Caco-2 (cell line): ENCODE measurements at regions of chr20 and their contacts with region 1.

Region 1: DNA sequence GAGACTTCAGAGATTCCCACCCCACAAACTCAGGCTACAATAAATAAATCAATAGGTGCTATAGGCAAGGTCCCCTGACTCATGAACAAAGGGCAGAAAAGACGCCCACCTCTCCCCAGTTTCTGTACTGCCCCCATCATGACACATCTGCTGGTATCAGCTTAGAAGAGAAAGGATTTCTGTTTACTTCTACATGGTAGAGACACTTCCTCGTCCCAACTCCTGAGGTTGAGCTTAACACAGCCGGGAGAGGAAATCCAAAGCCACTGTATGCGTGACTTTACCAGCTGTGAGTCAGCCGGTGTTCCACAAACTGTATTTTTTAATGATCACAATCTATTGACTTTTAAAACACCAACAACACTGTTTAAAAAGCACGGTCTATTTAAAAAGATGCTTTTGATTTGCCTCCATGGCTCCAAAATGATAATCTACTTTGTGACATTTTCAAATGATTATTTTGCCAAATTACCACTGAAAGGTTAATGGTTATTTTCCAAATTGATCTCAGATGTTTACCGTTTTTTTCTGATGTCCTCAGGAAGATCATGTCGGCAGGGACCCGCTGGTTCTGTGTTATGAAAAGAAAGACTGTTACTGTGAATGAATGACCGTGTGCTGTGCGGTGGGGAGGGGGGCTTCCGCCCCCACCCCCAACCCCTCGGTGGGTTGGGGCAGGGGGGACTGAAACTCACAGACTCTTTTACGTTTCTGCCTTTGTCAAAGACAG is 72.5 kb downstream of the ATP9A start:
- DNase-seq: no peak
- H3K4me3 ChIP-seq: no peak overlapping the region
- H3K4me3 Mint-ChIP-seq: no peak overlapping the region
- H3K27ac Mint-ChIP-seq: peak overlapping the region; percentile 0
- H3K4me1 ChIP-seq: peaks cover 4% of the 10 kb centered on the region
- H3K4me1 Mint-ChIP-seq: peaks cover 29% of the 10 kb centered on the region
- H3K27me3 ChIP-seq: no peaks in the 10 kb centered on the region
- H3K27me3 Mint-ChIP-seq: no peaks in the 10 kb centered on the region
- CTCF ChIP-seq: no peak

Region 2: DNA sequence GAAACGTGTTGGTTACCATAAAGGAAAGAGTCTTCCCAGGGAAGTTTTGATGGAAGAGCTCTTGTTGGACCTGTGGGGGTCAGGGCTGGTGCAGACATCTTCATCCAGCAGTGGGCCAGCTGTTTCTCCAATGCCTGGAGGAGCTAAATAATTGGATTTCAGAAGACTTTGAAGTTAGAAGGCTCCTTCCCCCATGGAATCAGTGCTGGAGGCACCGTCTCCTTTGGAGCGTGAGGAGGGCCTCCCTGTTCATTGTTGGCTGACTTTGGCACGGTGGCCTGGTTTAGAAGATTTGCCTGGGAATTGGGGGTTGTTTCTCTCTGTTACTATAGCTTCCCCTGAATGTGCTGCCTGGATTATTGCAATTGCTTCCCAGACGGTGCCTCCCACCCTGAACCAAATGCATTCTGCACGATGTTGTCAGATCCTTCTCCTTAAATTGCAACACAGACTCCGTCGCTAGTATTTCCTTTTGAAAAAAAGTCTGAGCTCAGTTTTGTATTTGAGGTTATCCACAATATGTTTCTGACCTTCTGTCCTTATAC is 645.1 kb before region 1 on chr20:
- CTCF ChIA-PET with region 1: interaction called, 10 read pairs
- POLR2A ChIA-PET with region 1: no interaction called
- intact Hi-C with region 1: no loop called
- DNase-seq: peak in 1 of 2 experiments; percentile 40
- H3K4me3 ChIP-seq: no peak overlapping the region
- H3K4me3 Mint-ChIP-seq: no peak overlapping the region
- H3K27ac Mint-ChIP-seq: no peak overlapping the region
- H3K4me1 ChIP-seq: no peaks in the 10 kb centered on the region
- H3K4me1 Mint-ChIP-seq: no peaks in the 10 kb centered on the region
- H3K27me3 ChIP-seq: no peaks in the 10 kb centered on the region; the same call in none of the 2 replicates
- H3K27me3 Mint-ChIP-seq: peaks cover 31% of the 10 kb centered on the region
- CTCF ChIP-seq: no peak

Region 3: DNA sequence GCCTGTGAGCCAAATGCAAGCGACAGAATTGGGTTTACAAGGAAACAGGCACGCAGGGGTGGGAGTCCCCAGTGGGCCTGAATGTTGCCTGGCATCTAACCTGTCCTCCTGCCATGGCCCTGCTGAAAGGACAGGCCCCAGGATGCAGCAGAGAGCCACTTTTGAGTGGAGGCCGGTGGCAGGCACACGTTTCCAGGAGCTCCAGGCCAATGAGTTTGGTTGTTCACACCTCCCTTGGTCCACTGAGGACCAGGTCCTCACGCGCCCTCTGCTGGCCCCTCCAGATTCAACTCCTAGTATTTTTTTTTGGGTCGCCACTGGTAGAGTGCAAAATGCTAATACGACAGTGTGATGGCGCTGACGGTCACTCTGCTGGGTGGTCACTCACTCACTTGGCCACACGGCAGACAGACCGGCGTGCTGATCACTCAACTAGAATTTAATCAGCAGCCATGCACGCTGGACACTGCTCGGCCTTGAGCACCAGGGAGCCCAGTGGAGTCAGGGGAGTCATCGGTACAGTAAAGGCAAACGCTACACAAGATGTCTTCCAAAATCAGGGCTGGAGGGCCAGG is 71.5 kb before region 1 on chr20:
- CTCF ChIA-PET with region 1: no interaction called
- POLR2A ChIA-PET with region 1: no interaction called
- intact Hi-C with region 1: no loop called
- DNase-seq: peak; percentile 83 to 86
- H3K4me3 ChIP-seq: no peak overlapping the region
- H3K4me3 Mint-ChIP-seq: no peak overlapping the region
- H3K27ac Mint-ChIP-seq: no peak overlapping the region
- H3K4me1 ChIP-seq: peaks cover 3% of the 10 kb centered on the region; the same call in 1 of the 2 replicates
- H3K4me1 Mint-ChIP-seq: no peaks in the 10 kb centered on the region
- H3K27me3 ChIP-seq: no peaks in the 10 kb centered on the region
- H3K27me3 Mint-ChIP-seq: no peaks in the 10 kb centered on the region
- CTCF ChIP-seq: peak; percentile 85 to 97

Region 4: GRCh38 chr20:51667002-51667408 is 28.7 kb before region 1 on chr20:
- CTCF ChIA-PET with region 1: interaction called, 17 read pairs
- POLR2A ChIA-PET with region 1: interaction called, 5 read pairs
- intact Hi-C with region 1: no loop called
- DNase-seq: peak; percentile 76 to 82
- H3K4me3 ChIP-seq: no peak overlapping the region
- H3K4me3 Mint-ChIP-seq: no peak overlapping the region
- H3K27ac Mint-ChIP-seq: peak overlapping the region; percentile 8
- H3K4me1 ChIP-seq: peaks cover 36% of the 10 kb centered on the region
- H3K4me1 Mint-ChIP-seq: peaks cover 36% of the 10 kb centered on the region
- H3K27me3 ChIP-seq: no peaks in the 10 kb centered on the region
- H3K27me3 Mint-ChIP-seq: no peaks in the 10 kb centered on the region
- CTCF ChIP-seq: no peak

Region 5: DNA sequence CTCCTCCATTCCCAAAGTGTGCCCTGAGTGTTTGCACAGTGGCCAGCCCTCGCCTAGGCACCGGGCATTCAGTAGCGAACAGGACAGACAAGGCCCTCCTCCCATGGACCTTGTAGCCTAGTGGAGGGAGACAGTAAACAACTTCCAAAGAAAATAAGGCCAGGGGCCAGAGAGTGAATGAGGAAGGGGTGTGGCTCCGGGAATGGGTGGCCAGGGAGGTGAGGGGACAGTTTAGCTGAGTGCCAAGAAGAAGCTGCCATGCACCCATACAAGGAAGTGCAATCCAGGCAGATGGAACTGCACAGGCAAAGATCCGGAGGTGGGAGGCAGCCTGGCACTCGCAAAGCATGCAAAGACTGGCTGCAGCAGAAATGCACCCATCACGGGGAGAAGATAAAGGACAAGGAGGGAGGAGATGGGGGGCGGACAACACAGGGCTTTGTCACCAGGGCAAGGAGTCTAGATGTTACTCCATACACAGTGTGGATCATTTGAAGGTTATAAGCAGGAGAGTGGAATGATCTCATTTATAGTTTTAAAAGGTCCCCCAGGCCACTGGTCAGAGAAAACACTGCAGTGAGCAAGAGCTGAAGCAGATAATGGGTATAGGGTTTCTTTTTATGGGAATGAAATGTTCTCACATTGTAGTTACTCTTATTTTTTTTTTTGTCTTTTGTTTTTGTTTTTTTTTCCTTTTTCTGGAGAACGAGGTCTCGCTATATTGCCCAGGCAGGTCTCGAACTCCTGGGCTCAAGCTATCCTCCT is 40.3 kb after region 1 on chr20:
- CTCF ChIA-PET with region 1: interaction called, 7 read pairs
- POLR2A ChIA-PET with region 1: no interaction called
- intact Hi-C with region 1: loop called (anchors 2 kb)
- DNase-seq: no peak
- H3K4me3 ChIP-seq: no peak overlapping the region
- H3K4me3 Mint-ChIP-seq: no peak overlapping the region
- H3K27ac Mint-ChIP-seq: peak overlapping the region; percentile 7
- H3K4me1 ChIP-seq: peaks cover 23% of the 10 kb centered on the region
- H3K4me1 Mint-ChIP-seq: peaks cover 52% of the 10 kb centered on the region
- H3K27me3 ChIP-seq: no peaks in the 10 kb centered on the region
- H3K27me3 Mint-ChIP-seq: no peaks in the 10 kb centered on the region
- CTCF ChIP-seq: no peak

Region 6: GRCh38 chr20:51767010-51767558 is 71.3 kb after region 1 on chr20:
- CTCF ChIA-PET with region 1: interaction called, 38 read pairs
- POLR2A ChIA-PET with region 1: interaction called, 6 read pairs
- intact Hi-C with region 1: no loop called
- DNase-seq: peak; percentile 99
- H3K4me3 ChIP-seq: peak overlapping the region; percentile 95
- H3K4me3 Mint-ChIP-seq: peak overlapping the region; percentile 84
- H3K27ac Mint-ChIP-seq: peak overlapping the region; percentile 80
- H3K4me1 ChIP-seq: peaks cover 15% of the 10 kb centered on the region
- H3K4me1 Mint-ChIP-seq: peaks cover 17% of the 10 kb centered on the region
- H3K27me3 ChIP-seq: no peaks in the 10 kb centered on the region
- H3K27me3 Mint-ChIP-seq: no peaks in the 10 kb centered on the region
- CTCF ChIP-seq: no peak

Region 7: DNA sequence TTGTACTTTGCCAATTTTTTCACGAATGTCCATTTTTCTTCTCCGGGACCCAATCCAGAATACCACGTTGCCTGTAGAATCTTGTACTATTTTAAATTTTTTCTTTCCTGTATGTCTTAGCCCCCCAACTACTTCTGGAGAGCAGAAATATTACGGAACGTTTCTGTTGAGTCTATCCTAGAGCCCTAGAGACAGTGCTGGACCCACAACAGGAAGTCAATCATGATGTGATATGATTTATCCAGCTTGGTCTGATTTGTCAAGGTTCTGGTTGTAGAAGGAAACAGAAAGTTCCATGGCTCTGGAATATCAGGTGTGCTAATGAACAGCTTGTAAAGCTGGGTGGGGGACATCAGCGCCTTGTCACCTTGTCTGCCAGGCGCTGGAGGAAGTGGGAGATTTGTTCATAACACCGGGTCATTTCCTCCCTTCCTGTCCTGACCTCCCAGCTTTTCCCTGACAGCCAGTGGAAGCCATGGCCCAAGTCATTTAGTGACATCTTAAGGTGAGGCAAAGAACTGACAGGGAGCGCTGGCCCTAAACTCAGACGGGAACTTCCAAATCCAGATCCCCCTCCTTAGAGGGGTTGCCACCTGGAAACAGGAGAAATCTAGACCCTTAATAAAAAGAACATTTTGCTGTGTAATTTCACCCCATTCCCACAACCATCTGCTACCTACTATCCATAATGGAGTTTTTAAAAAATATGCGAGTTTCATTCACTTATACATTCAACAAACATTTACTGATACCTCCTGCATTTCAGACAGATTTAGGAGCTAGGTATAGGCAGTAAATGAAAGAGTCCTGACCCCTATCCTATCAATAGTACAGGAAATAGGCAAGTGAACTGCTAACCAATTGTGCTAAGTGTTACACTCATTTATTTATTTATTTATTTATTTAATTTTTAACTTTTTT is 365.3 kb after region 1 on chr20:
- CTCF ChIA-PET with region 1: interaction called, 47 read pairs
- POLR2A ChIA-PET with region 1: no interaction called
- intact Hi-C with region 1: no loop called
- DNase-seq: peak; percentile 83 to 86
- H3K4me3 ChIP-seq: no peak overlapping the region
- H3K4me3 Mint-ChIP-seq: no peak overlapping the region
- H3K27ac Mint-ChIP-seq: peak overlapping the region; percentile 12
- H3K4me1 ChIP-seq: peaks cover 8% of the 10 kb centered on the region; the same call in 1 of the 2 replicates
- H3K4me1 Mint-ChIP-seq: peaks cover 8% of the 10 kb centered on the region
- H3K27me3 ChIP-seq: no peaks in the 10 kb centered on the region
- H3K27me3 Mint-ChIP-seq: no peaks in the 10 kb centered on the region
- CTCF ChIP-seq: peak; percentile 95 to 98

Region 8: DNA sequence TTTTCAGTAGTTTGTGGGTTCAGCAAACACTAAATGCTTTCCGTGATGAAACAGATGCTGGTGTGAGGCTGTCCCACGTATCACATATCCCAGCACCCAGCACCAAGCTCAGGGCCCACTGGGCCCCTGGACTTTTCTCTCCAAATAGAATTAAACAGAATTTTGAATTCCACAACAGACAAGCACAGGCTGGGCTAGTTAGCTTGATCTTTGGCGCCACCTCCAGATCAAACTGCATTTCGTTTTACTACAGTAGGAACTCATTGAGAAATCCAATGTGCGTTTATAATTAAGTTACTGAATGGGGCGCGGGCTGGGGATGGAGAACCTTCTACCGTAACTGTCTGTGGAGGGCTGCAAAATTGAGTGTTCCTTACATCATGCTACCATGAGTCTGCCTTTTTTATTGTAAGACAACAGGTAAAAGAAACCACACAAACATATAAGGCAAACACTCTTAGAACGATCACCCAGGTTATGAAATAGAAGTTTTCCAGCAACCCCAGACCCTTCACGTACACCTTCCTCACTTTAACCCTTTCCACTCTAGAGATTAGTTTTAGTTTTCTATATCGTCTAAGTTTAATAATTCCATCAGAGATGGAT is 388.0 kb after region 1 on chr20:
- CTCF ChIA-PET with region 1: interaction called, 18 read pairs
- POLR2A ChIA-PET with region 1: no interaction called
- intact Hi-C with region 1: loop called (anchors 1 kb)
- DNase-seq: peak; percentile 86 to 87
- H3K4me3 ChIP-seq: no peak overlapping the region
- H3K4me3 Mint-ChIP-seq: no peak overlapping the region
- H3K27ac Mint-ChIP-seq: peak overlapping the region; percentile 23
- H3K4me1 ChIP-seq: peaks cover 11% of the 10 kb centered on the region
- H3K4me1 Mint-ChIP-seq: peaks cover 28% of the 10 kb centered on the region
- H3K27me3 ChIP-seq: no peaks in the 10 kb centered on the region
- H3K27me3 Mint-ChIP-seq: no peaks in the 10 kb centered on the region
- CTCF ChIP-seq: peak; percentile 95 to 96